SK-N-SH (cell line): ENCODE measurements at regions of chr6 and their contacts with region 1.

Region 1: DNA sequence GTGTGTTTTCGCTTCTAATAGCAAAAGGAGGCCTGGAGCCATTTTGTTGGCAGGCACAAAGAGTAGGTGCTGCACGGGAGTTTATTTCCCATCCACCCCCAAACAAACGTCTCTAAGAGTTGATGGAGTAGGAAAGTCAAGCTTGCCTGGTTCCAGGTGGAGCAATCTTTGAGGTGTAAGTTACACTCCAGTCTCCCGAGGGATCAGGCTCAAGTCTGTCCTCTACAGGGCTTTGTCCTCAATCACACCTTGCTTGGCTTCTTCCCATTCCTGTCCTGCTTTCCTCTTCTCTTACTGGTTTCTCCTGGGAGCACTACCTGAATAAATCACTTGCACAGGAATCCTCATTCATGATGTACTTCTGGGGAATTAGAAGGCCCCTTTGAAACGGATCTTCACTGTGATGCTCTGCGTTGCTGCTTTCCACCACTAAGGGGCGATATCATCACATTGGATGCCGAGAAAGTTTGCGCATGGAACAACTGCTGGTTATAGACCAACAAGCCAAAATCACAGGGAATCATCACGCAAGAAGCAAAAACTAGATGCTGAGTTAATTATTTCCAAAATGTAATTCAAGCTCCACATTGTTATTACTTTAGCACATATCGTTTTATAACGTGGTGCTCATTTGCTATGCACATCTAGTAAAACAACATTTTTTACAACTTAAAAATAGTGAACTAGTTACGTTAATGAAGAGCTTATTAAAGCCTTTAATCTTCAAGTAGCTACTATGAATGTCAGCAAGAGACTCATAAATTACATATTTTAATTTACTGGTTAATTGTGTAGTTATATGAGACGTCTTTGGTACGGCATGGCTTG is 156.8 kb downstream of the DNAH8 start:
- DNase-seq: peak; percentile 56
- H3K4me3 ChIP-seq: no peak overlapping the region
- H3K27ac ChIP-seq: no peak overlapping the region
- H3K4me1 ChIP-seq: no peaks in the 10 kb centered on the region; a peak in 1 of 4 replicates
- H3K27me3 ChIP-seq: no peaks in the 10 kb centered on the region
- CTCF ChIP-seq: peak; percentile 95
- EP300 ChIP-seq: no peak
- RAD21 ChIP-seq: peak; percentile 92

Region 2: GRCh38 chr6:38857815-38858214 is 14.1 kb before region 1 on chr6:
- CTCF ChIA-PET with region 1: interaction called, 10 read pairs
- POLR2A ChIA-PET with region 1: no interaction called
- DNase-seq: no peak
- H3K4me3 ChIP-seq: no peak overlapping the region
- H3K27ac ChIP-seq: no peak overlapping the region
- H3K4me1 ChIP-seq: no peaks in the 10 kb centered on the region; a peak in 2 of 4 replicates
- H3K27me3 ChIP-seq: no peaks in the 10 kb centered on the region; the same call in 1 of the 2 replicates
- CTCF ChIP-seq: no peak
- EP300 ChIP-seq: no peak
- RAD21 ChIP-seq: no peak

Region 3: DNA sequence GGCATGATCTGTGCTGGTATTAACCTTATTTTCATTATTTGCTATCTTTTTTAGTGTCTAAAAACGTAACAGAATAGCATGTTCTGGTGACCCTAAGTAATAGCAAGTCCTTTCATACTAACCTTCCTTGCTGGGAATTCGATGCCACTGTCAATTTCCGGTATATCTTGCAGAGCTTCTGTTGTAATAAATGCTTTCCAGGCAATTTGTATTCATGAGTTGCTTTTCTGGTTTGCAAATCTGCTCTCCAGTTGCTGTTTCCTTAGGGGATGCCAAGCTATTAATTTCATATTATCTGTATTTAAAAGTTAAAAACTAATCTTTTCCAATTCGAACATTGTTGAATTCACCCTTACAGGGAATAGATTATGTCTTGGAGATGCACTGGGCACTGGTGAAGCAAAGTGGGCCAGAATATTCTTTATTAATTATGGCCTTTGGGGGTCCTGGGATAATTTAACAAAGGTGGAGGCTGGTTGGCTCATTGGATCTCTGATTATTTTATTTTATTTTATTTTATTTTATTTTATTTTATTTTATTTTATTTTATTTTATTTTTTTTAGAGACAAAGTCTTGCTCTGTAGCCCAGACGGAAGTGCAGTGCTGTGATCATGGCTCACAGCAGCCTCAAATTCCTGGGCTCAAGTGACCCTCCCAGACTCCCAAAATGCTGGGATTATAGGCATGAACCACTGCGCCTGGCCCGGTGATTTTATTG is 53.0 kb after region 1 on chr6:
- CTCF ChIA-PET with region 1: interaction called, 11 read pairs
- POLR2A ChIA-PET with region 1: no interaction called
- DNase-seq: no peak
- H3K4me3 ChIP-seq: no peak overlapping the region
- H3K27ac ChIP-seq: no peak overlapping the region
- H3K4me1 ChIP-seq: no peaks in the 10 kb centered on the region; a peak in 1 of 4 replicates
- H3K27me3 ChIP-seq: no peaks in the 10 kb centered on the region; the same call in 1 of the 2 replicates
- CTCF ChIP-seq: no peak
- EP300 ChIP-seq: no peak
- RAD21 ChIP-seq: no peak

Region 4: DNA sequence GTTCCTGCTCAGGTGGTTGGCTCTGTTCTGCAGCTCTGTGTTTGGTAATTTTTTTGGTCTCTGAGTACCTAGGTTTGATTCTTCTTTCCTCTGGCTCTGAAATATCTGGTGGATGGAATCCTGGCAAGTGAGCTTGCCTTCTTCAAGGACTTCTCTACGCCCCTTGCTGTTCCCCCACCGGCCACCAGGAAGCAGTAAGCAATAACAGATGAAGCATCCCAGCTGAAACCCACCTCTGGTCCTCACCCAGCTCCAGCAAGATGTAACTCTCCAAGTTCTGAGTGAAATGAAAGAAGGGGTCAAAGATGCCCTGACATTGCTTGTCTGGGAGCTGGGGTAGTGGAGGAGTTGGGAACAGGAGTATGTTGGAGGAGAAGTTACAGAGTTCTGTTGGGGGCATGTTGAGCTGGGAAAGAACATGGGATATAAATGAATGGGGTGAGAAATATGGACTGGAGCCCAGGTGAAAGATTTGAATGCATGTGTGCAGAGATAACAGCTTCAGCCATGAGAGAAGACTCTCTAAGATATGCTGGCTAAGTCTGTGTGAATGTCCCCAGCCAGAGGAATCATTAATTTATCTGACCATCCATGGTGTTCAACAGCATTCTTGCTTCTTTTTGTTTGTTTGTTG is 125.3 kb after region 1 on chr6:
- CTCF ChIA-PET with region 1: interaction called, 25 read pairs
- POLR2A ChIA-PET with region 1: no interaction called
- DNase-seq: peak; percentile 49
- H3K4me3 ChIP-seq: no peak overlapping the region
- H3K27ac ChIP-seq: no peak overlapping the region
- H3K4me1 ChIP-seq: no peaks in the 10 kb centered on the region
- H3K27me3 ChIP-seq: no peaks in the 10 kb centered on the region
- CTCF ChIP-seq: peak; percentile 61
- EP300 ChIP-seq: no peak
- RAD21 ChIP-seq: peak; percentile 91

Region 5: DNA sequence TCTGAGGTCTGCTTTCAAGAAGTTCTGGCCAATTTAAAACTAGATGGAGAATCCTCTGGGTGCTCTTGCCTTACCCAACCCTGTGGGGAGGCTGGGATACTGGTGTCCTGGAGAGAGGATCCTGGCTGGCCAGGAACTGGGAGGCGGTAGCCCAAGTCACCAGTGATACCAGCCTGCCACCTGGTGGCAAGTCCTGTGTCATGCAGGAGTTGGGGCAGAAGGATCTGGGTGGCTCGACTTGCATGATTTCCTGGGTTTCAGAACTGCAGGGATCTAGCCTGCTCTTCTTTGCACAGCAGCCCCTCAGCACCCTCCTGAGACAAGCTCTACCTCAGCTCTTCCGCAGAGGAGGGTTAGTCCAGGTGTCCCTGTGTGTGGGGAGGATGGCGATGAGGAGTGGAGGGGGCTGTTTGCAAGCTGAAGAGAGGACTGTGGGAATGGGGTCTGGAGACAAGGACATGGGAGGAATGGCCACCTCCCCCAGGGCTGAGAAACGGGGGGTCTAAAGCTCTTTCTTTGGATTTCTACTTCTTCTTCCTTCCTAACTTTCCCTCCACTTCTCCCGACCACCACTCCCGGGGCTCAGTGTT is 438.1 kb after region 1 on chr6:
- CTCF ChIA-PET with region 1: interaction called, 37 read pairs
- POLR2A ChIA-PET with region 1: no interaction called
- DNase-seq: peak; percentile 88
- H3K4me3 ChIP-seq: no peak overlapping the region; a peak in 1 of 4 replicates
- H3K27ac ChIP-seq: no peak overlapping the region
- H3K4me1 ChIP-seq: peaks cover 0 to 2% of the 10 kb centered on the region in 2 experiments; a peak in 1 of 4 replicates
- H3K27me3 ChIP-seq: peaks cover 7% of the 10 kb centered on the region; the same call in 1 of the 2 replicates
- CTCF ChIP-seq: peak; percentile 78
- EP300 ChIP-seq: no peak
- RAD21 ChIP-seq: peak; percentile 94